ENCODE measurements at regions of chr1 and their contacts with region 1.

Region 1: GRCh38 chr1:94654031-94654430 is 112.5 kb upstream of the F3 start:
- DNase-seq: peak; percentile 64 to 98
- H3K4me3 ChIP-seq: no peak overlapping the region
- H3K27ac ChIP-seq: peak overlapping the region; percentile 82
- H3K4me1 ChIP-seq: peaks cover 60% of the 10 kb centered on the region
- H3K27me3 ChIP-seq: no peaks in the 10 kb centered on the region
- CTCF ChIP-seq: no peak

Region 2: GRCh38 chr1:94669203-94669602 is 15.2 kb after region 1 on chr1:
- CTCF ChIA-PET with region 1: interaction called, 3 read pairs
- POLR2A ChIA-PET with region 1: interaction called, 11 read pairs
- intact Hi-C with region 1: no loop called
- DNase-seq: no peak
- H3K4me3 ChIP-seq: no peak overlapping the region
- H3K27ac ChIP-seq: peak overlapping the region; percentile 38
- H3K4me1 ChIP-seq: peaks cover 14% of the 10 kb centered on the region
- H3K27me3 ChIP-seq: no peaks in the 10 kb centered on the region
- CTCF ChIP-seq: no peak

Region 3: GRCh38 chr1:94693029-94693428 is 39.0 kb after region 1 on chr1:
- CTCF ChIA-PET with region 1: no interaction called
- POLR2A ChIA-PET with region 1: no interaction called
- intact Hi-C with region 1: no loop called
- DNase-seq: no peak
- H3K4me3 ChIP-seq: no peak overlapping the region
- H3K27ac ChIP-seq: no peak overlapping the region
- H3K4me1 ChIP-seq: peaks cover 2% of the 10 kb centered on the region
- H3K27me3 ChIP-seq: no peaks in the 10 kb centered on the region
- CTCF ChIP-seq: no peak